Breast epithelium (tissue), 4 donors: ENCODE measurements at regions of chr22 and their contacts with region 1.

Region 1: GRCh38 chr22:23849009-23850006 is 8.4 kb upstream of the SLC2A11 start:
- DNase-seq: peak; percentile 62 to 85
- H3K4me3 ChIP-seq: peak overlapping the region in 1 of 3 donors; percentile 27
- H3K27ac ChIP-seq: no peak overlapping the region
- H3K4me1 ChIP-seq: peaks cover 9 to 23% of the 10 kb centered on the region in 2 donors
- H3K27me3 ChIP-seq: no peaks in the 10 kb centered on the region
- CTCF ChIP-seq: peak; percentile 93 to 96 (median 94)
- POLR2A ChIP-seq: no peak

Region 2: DNA sequence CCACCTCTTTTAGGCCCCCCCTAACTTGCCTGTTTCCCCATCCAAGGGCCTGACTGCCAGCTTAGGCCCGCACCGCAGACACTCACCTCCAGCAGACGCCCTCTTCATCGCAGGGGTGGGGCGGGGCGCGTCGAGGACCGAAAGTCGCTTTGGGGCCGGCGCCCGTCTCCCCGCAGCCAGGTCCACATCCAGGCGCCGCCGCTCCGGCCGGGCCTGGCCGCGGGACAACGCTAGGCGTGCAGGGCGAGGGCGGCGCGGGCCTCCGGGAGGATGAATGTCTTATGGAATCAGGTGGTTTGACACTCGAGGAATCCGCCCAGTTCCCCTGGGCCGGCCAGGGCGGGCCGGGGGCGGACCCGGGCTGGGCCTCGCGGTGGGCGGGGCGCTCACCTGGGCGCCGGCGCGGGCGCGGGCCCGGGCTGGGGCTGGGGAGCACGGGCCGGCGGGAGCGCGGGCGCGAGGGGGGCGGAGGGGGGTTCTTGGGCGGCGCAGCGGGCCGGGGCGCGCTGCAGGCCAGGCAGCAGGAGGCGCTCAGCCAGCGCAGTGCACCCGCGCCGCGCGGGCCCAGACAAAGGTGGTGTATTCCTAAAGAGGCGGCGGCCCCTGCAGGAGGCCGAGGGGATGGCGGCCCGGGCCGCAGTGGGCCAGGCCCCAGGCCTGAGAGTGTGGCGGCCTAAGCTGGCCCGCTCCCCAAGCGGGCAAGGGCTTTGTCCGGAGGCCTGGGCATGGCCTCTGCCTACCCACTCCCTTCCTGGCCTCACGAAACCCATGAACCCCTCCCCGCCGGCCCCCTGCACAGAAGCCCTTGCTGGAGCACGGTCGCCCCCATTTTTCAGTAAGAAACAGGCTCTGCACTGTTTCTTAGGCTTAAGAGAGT is 446.8 kb before region 1 on chr22:
- intact Hi-C with region 1: loop called (anchors 5 kb)
- DNase-seq: peak; percentile 73 to 76
- H3K4me3 ChIP-seq: peak overlapping the region; percentile 20 to 66 (median 55)
- H3K27ac ChIP-seq: peak overlapping the region; percentile 32 to 40
- H3K4me1 ChIP-seq: no peaks in the 10 kb centered on the region
- H3K27me3 ChIP-seq: no peaks in the 10 kb centered on the region
- CTCF ChIP-seq: peak in 2 of 3 donors; percentile 51 to 52
- POLR2A ChIP-seq: no peak

Region 3: GRCh38 chr22:23521441-23522113 is 327.7 kb before region 1 on chr22:
- intact Hi-C with region 1: loop called (anchors 10 kb)
- DNase-seq: peak; percentile 91 to 94
- H3K4me3 ChIP-seq: peak overlapping the region; percentile 39 to 70 (median 50)
- H3K27ac ChIP-seq: peak overlapping the region; percentile 96 to 97
- H3K4me1 ChIP-seq: peaks cover 0 to 16% of the 10 kb centered on the region in 2 donors
- H3K27me3 ChIP-seq: no peaks in the 10 kb centered on the region
- CTCF ChIP-seq: no peak
- POLR2A ChIP-seq: no peak

Region 4: GRCh38 chr22:23767673-23768548 is 81.4 kb before region 1 on chr22 and contains the start of gene CHCHD10:
- intact Hi-C with region 1: loop called (anchors 5 kb)
- DNase-seq: peak; percentile 71 to 76
- H3K4me3 ChIP-seq: peak within 1 kb of the TSS; percentile 67 to 80 (median 74)
- H3K27ac ChIP-seq: peak within 1 kb of the TSS; percentile 83 to 89
- H3K4me1 ChIP-seq: peaks cover 2 to 5% of the 10 kb centered on the region in 2 donors
- H3K27me3 ChIP-seq: no peaks in the 10 kb centered on the region
- CTCF ChIP-seq: peak; percentile 53 to 73 (median 71)
- POLR2A ChIP-seq: peak; percentile 20
- total RNA-seq, gene CHCHD10: 5.6 to 22.8 (median 21.4) TPM